A549 (cell line): ENCODE measurements at regions of chr2 and their contacts with region 1.

Region 1: DNA sequence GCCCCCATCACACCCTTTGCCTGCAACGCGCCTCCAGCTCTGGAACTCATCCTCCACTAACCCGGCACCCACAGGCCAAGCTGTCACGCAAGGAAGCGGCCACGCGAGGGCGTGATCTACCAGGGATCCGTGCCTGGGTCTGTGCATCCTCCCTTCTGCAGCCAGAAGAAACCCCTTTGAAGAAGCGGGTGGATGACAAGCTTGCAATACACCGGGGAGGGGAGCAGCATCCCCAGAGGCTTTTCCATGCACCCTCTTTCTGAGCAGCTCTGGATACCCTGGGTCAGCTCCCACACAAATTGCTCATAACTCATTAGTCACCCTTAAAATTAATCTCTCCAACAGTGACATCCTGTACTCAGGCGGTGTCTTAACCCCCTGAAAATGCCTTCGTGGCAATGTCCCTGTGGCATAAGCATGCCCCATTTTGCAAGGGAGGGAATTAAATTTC is 47.6 kb downstream of the PDCL3 start:
- DNase-seq: peak; percentile 70 to 81
- ATAC-seq: peak; percentile 87 to 94
- H3K4me3 ChIP-seq: no peak overlapping the region
- H3K27ac ChIP-seq: no peak overlapping the region
- H3K4me1 ChIP-seq: peaks cover 3% of the 10 kb centered on the region; the same call in 1 of the 3 replicates
- CTCF ChIP-seq: peak; percentile 77
- EP300 ChIP-seq: no peak
- POLR2A ChIP-seq: no peak
- RAD21 ChIP-seq: peak; percentile 92 to 96

Region 2: DNA sequence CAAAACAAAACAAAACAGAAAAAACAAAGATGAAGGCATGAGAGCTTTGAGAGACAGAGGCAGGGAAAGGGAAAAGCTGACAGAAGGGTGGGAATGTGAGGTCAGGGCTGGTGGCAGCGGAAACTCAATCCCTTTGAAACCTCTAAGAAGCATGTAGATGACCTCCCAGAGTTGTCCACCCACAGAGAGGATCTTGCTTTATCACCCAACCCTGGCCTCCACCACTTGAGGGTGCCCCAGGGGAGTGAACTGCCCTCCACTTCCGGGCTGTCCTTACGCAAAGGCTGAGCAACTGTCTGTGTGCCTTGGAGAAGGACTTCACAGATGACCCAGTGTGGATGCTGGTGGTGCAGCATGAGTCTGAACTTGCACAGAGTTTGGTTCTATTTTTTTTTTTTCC is 20.9 kb before region 1 on chr2:
- CTCF ChIA-PET with region 1: interaction called, 30 read pairs
- POLR2A ChIA-PET with region 1: no interaction called
- DNase-seq: no peak
- ATAC-seq: peak; percentile 71 to 76; a peak in 5 of 6 replicates
- H3K4me3 ChIP-seq: no peak overlapping the region
- H3K27ac ChIP-seq: no peak overlapping the region
- H3K4me1 ChIP-seq: peaks cover 8% of the 10 kb centered on the region
- CTCF ChIP-seq: no peak
- EP300 ChIP-seq: no peak
- POLR2A ChIP-seq: no peak
- RAD21 ChIP-seq: no peak

Region 3: GRCh38 chr2:100630473-100630977 is 20.1 kb after region 1 on chr2:
- CTCF ChIA-PET with region 1: interaction called, 11 read pairs
- POLR2A ChIA-PET with region 1: no interaction called
- DNase-seq: no peak
- ATAC-seq: no peak
- H3K4me3 ChIP-seq: no peak overlapping the region
- H3K27ac ChIP-seq: no peak overlapping the region
- H3K4me1 ChIP-seq: 0 out of 3 replicates have a peak, but pooled peaks cover 6% of the 10 kb centered on the region
- CTCF ChIP-seq: no peak
- EP300 ChIP-seq: no peak
- POLR2A ChIP-seq: no peak
- RAD21 ChIP-seq: no peak

Region 4: GRCh38 chr2:100818606-100819369 is 208.4 kb after region 1 on chr2:
- CTCF ChIA-PET with region 1: interaction called, 76 read pairs
- POLR2A ChIA-PET with region 1: interaction called, 3 read pairs
- DNase-seq: peak; percentile 62 to 72
- ATAC-seq: peak; percentile 65 to 79
- H3K4me3 ChIP-seq: peak overlapping the region; percentile 96
- H3K27ac ChIP-seq: peak overlapping the region; percentile 97 to 98
- H3K4me1 ChIP-seq: peaks cover 34% of the 10 kb centered on the region
- CTCF ChIP-seq: peak; percentile 57
- EP300 ChIP-seq: no peak
- POLR2A ChIP-seq: 0 out of 2 replicates have a peak, but pooled peaks have one; percentile 2
- RAD21 ChIP-seq: peak; percentile 51 to 57; a peak in 4 of 5 replicates

Region 5: DNA sequence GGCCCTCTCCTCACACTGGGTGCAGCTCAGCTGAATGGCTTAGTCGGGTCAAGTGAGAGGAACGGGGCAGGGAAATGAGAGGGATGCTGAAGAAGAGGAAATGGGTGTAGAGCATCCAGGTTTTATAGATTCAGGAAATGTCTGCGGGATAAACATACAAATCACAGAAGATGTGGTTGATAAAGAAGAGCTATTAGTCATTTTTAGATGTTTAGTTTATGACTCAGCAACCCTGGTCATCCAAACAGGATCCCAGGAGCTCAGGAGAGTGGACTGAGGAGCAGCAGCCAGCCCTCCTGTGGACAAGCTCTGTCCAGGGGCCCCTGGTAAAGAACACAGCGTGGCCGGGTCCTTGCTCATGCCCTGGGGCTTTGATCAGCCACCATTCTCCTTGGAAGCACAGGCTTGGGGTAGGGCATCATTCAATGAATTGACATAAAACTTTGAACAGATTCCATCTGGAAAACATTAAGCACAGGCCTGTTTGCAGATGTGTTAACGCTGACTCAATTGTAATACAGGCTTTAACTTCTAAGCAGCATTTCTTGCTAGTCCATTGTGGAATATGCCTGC is 292.5 kb after region 1 on chr2:
- CTCF ChIA-PET with region 1: interaction called, 10 read pairs
- POLR2A ChIA-PET with region 1: interaction called, 4 read pairs
- DNase-seq: peak; percentile 94
- ATAC-seq: peak; percentile 95 to 97
- H3K4me3 ChIP-seq: no peak overlapping the region
- H3K27ac ChIP-seq: peak overlapping the region; percentile 97
- H3K4me1 ChIP-seq: peaks cover 66% of the 10 kb centered on the region
- CTCF ChIP-seq: no peak
- EP300 ChIP-seq: peak; percentile 89; a peak in 3 of 5 replicates
- POLR2A ChIP-seq: no peak
- RAD21 ChIP-seq: peak; percentile 29 to 60; a peak in 4 of 5 replicates

Region 6: GRCh38 chr2:100978582-100979191 is 368.3 kb after region 1 on chr2:
- CTCF ChIA-PET with region 1: interaction called, 22 read pairs
- POLR2A ChIA-PET with region 1: no interaction called
- DNase-seq: no peak
- ATAC-seq: no peak
- H3K4me3 ChIP-seq: no peak overlapping the region
- H3K27ac ChIP-seq: no peak overlapping the region
- H3K4me1 ChIP-seq: peaks cover 1% of the 10 kb centered on the region
- CTCF ChIP-seq: no peak
- EP300 ChIP-seq: no peak
- POLR2A ChIP-seq: no peak
- RAD21 ChIP-seq: no peak

Region 7: GRCh38 chr2:101001691-101002561 is 391.5 kb after region 1 on chr2 and contains the start of gene RPL31:
- CTCF ChIA-PET with region 1: interaction called, 12 read pairs
- POLR2A ChIA-PET with region 1: interaction called, 6 read pairs
- DNase-seq: peak; percentile 94 to 98
- ATAC-seq: peak; percentile 85 to 88
- H3K4me3 ChIP-seq: peak within 1 kb of the TSS; percentile 71
- H3K27ac ChIP-seq: peak within 1 kb of the TSS; percentile 86 to 98
- H3K4me1 ChIP-seq: peaks cover 39% of the 10 kb centered on the region
- CTCF ChIP-seq: no peak
- EP300 ChIP-seq: no peak
- POLR2A ChIP-seq: peak; percentile 97
- RAD21 ChIP-seq: no peak
- polyA plus RNA-seq, gene RPL31: 2,064 and 3,103 TPM in 2 replicates